SK-N-SH (cell line): ENCODE measurements at regions of chr5 and their contacts with region 1.

Region 1: GRCh38 chr5:142713121-142713706 is 27.3 kb upstream of the FGF1 start:
- DNase-seq: peak; percentile 85
- H3K4me3 ChIP-seq: peak overlapping the region; percentile 61 to 90
- H3K27ac ChIP-seq: peak overlapping the region; percentile 76 to 80
- H3K4me1 ChIP-seq: peaks cover 5 to 26% of the 10 kb centered on the region in 2 experiments; a peak in 3 of 4 replicates
- H3K27me3 ChIP-seq: no peaks in the 10 kb centered on the region
- CTCF ChIP-seq: peak; percentile 98
- EP300 ChIP-seq: no peak
- RAD21 ChIP-seq: peak; percentile 58

Region 2: DNA sequence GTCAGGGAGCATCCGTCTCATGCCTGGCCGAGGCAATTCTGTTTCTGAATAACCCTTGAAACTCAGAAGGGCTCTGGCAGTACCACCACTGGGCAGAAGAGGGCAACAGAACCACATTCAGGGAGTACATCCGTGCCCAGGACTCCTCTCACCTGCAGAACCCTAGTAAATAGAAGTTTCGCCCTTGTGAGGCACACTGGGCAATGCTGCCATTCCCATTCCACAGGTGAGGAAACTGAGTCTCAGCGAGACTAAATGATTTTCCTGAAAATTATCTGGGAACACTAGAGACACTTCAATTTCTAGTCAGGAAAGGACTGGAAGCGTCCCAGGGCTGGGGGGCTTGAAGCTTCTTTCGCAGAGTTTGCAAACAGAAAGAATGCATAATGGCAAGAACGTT is 102.1 kb before region 1 on chr5:
- CTCF ChIA-PET with region 1: interaction called, 30 read pairs
- POLR2A ChIA-PET with region 1: no interaction called
- DNase-seq: peak; percentile 76
- H3K4me3 ChIP-seq: no peak overlapping the region
- H3K27ac ChIP-seq: no peak overlapping the region
- H3K4me1 ChIP-seq: peaks cover 2 to 14% of the 10 kb centered on the region in 2 experiments; a peak in 2 of 4 replicates
- H3K27me3 ChIP-seq: no peaks in the 10 kb centered on the region
- CTCF ChIP-seq: peak; percentile 85
- EP300 ChIP-seq: no peak
- RAD21 ChIP-seq: peak; percentile 98

Region 3: DNA sequence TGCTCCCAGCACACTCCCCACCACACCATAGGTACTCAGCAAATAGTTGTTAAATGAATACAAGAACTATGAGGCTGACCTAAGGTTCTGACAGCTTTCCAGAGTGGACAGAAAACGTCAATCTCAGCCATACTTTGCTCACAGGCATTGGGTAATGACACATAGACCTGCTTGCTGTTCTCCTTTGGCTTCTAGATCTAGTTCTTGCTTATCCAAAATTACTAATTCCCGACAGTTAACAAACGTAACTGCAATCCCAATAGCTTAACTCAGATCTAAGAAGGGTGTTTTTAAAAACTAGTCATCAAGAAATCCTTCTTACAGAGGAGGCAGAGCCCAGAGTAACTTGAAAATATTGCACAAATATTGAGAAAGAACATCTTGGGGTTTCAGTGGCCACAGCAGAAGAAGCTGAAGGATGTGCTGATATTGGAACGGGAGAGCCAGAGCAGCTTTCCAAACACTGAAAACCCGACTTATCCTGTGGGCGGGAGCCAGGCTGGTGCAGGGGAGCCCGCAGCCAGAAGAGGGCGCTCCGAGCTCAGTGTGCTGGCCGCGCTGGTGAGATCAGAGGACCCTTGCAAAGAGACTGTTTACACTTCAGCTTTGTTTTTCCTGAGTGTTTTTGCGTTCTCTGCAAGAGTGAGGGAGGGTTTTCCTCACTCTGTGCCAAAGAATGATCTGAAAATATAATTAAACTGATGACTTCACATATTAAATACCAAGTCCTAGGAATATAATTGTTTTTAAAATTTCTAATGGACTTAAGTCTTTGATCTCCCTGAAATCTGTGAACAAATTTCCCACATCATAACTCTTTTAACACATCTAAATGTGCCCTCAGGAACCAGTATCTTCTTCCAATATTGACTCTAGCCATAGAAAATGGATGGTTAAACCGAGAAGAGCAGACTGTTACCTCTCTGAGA is 57.6 kb before region 1 on chr5:
- CTCF ChIA-PET with region 1: interaction called, 668 read pairs
- POLR2A ChIA-PET with region 1: no interaction called
- DNase-seq: peak; percentile 91
- H3K4me3 ChIP-seq: no peak overlapping the region; a peak in 1 of 4 replicates
- H3K27ac ChIP-seq: no peak overlapping the region; a peak in 1 of 4 replicates
- H3K4me1 ChIP-seq: peaks cover 4 to 5% of the 10 kb centered on the region in 2 experiments; a peak in 2 of 4 replicates
- H3K27me3 ChIP-seq: no peaks in the 10 kb centered on the region
- CTCF ChIP-seq: peak; percentile 99
- EP300 ChIP-seq: no peak
- RAD21 ChIP-seq: peak; percentile 99

Region 4: DNA sequence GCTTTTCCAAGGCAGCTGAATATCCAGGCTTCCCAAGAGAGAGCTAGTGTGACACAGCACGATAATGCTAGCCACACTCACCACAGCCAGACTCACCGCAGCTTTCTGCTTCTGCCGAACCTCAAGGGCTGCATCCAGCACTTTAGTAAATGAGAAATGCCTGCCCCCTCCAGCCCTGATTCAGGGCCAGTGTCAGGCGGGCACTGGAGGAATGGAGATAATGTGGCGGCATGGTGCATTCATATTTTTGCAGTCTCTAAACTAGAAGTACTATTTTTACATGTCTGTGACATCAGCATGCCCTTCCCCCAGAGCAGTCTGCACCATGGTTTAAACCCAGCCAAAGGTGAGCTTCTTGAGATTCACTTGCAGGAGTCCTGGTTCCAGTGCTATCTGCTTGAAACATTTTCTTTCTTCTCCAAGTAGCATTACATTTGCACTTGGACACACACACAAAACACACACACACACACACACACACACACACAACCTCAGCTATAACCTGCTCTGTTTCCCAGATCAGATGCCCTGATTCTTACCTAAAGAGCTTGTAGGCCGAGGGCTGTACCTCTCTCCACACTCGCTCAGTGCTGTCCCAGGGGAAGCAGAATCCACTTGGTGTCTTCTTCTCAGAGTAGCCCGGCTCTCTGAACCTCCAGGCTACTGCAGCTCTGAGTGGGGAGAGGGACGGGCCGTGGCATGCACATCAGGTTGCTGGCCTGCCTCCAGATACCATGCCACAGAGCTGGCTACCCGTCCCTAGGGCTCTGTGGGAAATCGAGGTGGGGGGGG is 27.6 kb before region 1 on chr5 and contains the start of gene FGF1:
- CTCF ChIA-PET with region 1: interaction called, 248 read pairs
- POLR2A ChIA-PET with region 1: interaction called, 3 read pairs
- DNase-seq: peak; percentile 76
- H3K4me3 ChIP-seq: no peak within 1 kb of the TSS
- H3K27ac ChIP-seq: peak within 1 kb of the TSS in 1 of 2 experiments; percentile 95; a peak in 2 of 4 replicates
- H3K4me1 ChIP-seq: peaks cover 15 to 52% of the 10 kb centered on the region in 2 experiments; a peak in 3 of 4 replicates
- H3K27me3 ChIP-seq: no peaks in the 10 kb centered on the region
- CTCF ChIP-seq: no peak
- EP300 ChIP-seq: no peak
- RAD21 ChIP-seq: no peak
- polyA plus RNA-seq, gene FGF1: 5.3 and 5.9 TPM in 2 replicates

Region 5: GRCh38 chr5:142769741-142770631 is 56.8 kb after region 1 on chr5 and contains the start of gene ARHGAP26:
- CTCF ChIA-PET with region 1: interaction called, 90 read pairs
- POLR2A ChIA-PET with region 1: no interaction called
- DNase-seq: peak; percentile 97
- H3K4me3 ChIP-seq: peak within 1 kb of the TSS; percentile 70 to 87
- H3K27ac ChIP-seq: peak within 1 kb of the TSS; percentile 52 to 89; a peak in 3 of 4 replicates
- H3K4me1 ChIP-seq: peaks cover 12 to 17% of the 10 kb centered on the region in 2 experiments; a peak in 3 of 4 replicates
- H3K27me3 ChIP-seq: no peaks in the 10 kb centered on the region
- CTCF ChIP-seq: peak; percentile 36
- EP300 ChIP-seq: no peak
- RAD21 ChIP-seq: peak; percentile 59
- polyA plus RNA-seq, gene ARHGAP26: 6.1 and 8.4 TPM in 2 replicates

Region 6: DNA sequence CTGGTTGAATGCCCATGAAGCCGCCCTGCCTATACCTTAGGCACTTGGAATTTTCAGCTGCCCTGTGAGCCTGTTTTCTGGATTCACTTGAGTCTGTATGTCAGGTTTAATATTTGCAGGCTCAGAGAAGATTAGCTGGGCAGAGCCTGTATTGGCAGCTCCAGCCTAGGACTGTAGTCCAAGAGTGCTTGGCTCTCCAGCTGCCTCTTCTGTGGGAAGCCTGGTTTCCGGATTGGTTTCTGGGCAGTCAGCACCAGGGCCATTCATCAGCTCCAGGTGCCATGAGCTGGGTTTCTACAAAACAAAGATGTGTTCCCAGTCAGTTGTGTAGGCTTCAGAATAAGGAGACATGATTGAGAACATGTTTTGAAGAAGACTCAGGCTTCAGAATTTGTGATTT is 147.1 kb after region 1 on chr5:
- CTCF ChIA-PET with region 1: interaction called, 15 read pairs
- POLR2A ChIA-PET with region 1: no interaction called
- DNase-seq: no peak
- H3K4me3 ChIP-seq: no peak overlapping the region
- H3K27ac ChIP-seq: peak overlapping the region in 1 of 2 experiments; percentile 39; a peak in 2 of 4 replicates
- H3K4me1 ChIP-seq: peaks cover 10 to 53% of the 10 kb centered on the region in 2 experiments; a peak in 2 of 4 replicates
- H3K27me3 ChIP-seq: no peaks in the 10 kb centered on the region
- CTCF ChIP-seq: no peak
- EP300 ChIP-seq: no peak
- RAD21 ChIP-seq: no peak

Region 7: GRCh38 chr5:142906863-142907671 is 193.9 kb after region 1 on chr5:
- CTCF ChIA-PET with region 1: interaction called, 19 read pairs
- POLR2A ChIA-PET with region 1: no interaction called
- DNase-seq: no peak
- H3K4me3 ChIP-seq: no peak overlapping the region
- H3K27ac ChIP-seq: no peak overlapping the region
- H3K4me1 ChIP-seq: peaks cover 0 to 8% of the 10 kb centered on the region in 2 experiments; a peak in 1 of 4 replicates
- H3K27me3 ChIP-seq: no peaks in the 10 kb centered on the region
- CTCF ChIP-seq: no peak
- EP300 ChIP-seq: no peak
- RAD21 ChIP-seq: no peak